Activated CD8-positive, alpha-beta T cell treated with anti-CD3 and anti-CD28 coated beads, Interleukin-2, amount 10 ng/mL, durations not matched to agents 7 days and 5 days (primary cell): ENCODE measurements at regions of chr1 and their contacts with region 1.

Region 1: DNA sequence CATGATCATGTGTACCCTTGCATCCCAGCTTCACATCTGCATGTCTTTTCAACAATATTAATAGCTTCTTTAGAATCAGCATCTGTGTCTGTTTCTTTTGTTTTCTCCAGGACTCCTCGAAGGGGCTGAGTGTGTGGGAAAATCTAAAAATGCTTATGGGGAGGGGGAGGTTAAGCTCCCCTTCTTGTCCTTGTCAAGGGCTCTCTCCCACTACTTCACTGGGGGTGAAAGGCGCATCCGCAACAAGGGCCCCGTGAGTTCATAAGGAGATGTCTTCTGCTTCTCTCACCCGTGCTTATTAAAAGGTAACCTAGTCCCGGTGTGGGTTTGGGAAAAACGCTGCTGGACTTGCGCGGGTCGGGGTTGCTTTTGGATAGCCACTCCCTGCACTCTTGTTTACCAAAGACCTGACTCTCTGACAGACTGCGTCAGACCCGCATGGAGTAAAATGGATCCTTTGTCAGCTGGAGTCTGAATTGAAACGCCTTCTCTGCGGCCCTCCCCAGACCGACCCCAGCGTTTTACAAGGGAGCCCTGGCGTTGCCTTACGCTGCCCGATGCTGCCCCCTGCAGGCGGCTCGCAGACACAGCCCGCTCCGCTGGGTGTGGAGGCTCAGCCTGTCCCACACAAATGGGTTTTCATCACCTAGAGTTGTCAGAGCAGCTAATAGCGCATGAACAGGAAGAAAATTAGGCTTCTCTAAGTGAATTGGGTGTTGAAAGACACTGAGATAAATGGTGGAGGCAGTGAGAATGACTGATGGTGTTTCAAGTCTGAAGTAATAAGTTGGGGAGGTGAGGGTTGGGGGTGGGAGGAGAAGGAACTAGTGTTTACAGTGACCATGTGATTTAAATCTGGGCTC is 53.8 kb downstream of the IER5 start:
- DNase-seq: peak; percentile 94
- ATAC-seq: peak; percentile 92
- H3K4me3 Mint-ChIP-seq: peak overlapping the region; percentile 52
- H3K27ac Mint-ChIP-seq: peak overlapping the region; percentile 70
- H3K4me1 Mint-ChIP-seq: peaks cover 66% of the 10 kb centered on the region
- H3K27me3 Mint-ChIP-seq: peaks cover 13% of the 10 kb centered on the region

Region 2: DNA sequence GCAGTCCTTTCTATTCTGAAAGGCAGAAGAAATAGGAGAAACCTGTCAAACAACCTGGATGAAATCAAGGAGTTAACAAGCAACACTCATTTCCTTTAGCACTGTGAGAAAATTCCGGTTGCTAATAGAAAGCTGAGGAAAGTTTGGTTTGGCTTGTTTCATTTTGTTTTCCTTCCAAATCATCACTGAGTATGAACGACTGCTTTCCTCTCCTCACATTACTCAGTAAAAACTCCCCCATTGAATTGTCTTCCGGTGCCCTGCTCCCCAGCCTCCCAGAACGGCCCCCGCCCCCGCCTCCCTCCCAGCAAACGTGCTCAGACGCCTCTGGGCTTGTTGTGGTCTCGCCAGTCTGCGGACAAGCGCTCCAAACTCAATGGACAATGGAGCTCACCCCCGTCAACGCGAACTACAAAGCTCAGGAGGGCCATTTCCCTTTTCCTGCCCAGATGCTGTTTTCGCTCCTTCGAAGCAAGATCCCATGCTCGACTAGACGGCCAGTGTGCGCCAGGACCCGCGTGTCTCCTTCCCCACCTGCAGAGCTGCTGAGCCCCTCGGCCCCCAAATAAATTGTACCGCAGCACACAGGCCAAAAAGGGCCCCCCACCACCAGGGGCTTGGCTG is 120.4 kb before region 1 on chr1:
- CTCF ChIA-PET with region 1: interaction called, 12 read pairs
- POLR2A ChIA-PET with region 1: interaction called, 4 read pairs
- DNase-seq: peak; percentile 72
- ATAC-seq: peak; percentile 38
- H3K4me3 Mint-ChIP-seq: peak overlapping the region; percentile 93
- H3K27ac Mint-ChIP-seq: peak overlapping the region; percentile 93
- H3K4me1 Mint-ChIP-seq: peaks cover 51% of the 10 kb centered on the region
- H3K27me3 Mint-ChIP-seq: peaks cover 18% of the 10 kb centered on the region

Region 3: DNA sequence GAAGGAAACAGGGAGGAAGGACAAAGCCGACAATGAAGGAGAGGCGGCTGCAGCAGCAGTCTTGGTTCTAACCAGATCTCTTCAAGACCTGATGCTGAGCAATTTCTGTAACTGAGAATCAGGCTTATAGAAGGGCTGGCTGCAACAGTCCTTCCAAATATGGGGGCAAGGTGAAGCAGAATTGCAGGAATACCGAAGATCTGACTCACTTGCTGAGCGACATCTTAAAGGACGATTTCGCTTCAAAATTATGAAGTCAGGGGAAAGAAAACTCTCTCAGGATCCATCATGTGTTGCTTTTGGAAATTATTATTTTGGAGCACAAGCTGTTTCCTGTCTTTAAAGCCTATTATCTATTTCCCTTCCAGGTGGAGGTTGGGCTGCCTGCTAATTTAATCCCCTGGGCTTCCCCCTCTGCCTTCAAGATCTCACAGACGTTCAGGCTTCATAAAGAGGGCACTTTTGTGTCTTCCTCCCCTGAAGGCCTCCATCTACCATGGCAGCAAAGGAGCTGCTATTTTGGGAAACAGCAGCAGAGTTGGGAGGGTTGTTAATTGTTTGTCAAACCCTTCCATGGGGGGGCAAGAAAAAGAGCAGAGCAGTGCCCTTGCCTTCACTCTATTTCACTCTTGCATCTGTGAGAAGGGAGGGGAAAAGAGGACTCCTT is 64.6 kb before region 1 on chr1:
- CTCF ChIA-PET with region 1: interaction called, 395 read pairs
- POLR2A ChIA-PET with region 1: no interaction called
- DNase-seq: no peak
- ATAC-seq: no peak
- H3K4me3 Mint-ChIP-seq: no peak overlapping the region
- H3K27ac Mint-ChIP-seq: no peak overlapping the region
- H3K4me1 Mint-ChIP-seq: peaks cover 5% of the 10 kb centered on the region
- H3K27me3 Mint-ChIP-seq: peaks cover 21% of the 10 kb centered on the region

Region 4: DNA sequence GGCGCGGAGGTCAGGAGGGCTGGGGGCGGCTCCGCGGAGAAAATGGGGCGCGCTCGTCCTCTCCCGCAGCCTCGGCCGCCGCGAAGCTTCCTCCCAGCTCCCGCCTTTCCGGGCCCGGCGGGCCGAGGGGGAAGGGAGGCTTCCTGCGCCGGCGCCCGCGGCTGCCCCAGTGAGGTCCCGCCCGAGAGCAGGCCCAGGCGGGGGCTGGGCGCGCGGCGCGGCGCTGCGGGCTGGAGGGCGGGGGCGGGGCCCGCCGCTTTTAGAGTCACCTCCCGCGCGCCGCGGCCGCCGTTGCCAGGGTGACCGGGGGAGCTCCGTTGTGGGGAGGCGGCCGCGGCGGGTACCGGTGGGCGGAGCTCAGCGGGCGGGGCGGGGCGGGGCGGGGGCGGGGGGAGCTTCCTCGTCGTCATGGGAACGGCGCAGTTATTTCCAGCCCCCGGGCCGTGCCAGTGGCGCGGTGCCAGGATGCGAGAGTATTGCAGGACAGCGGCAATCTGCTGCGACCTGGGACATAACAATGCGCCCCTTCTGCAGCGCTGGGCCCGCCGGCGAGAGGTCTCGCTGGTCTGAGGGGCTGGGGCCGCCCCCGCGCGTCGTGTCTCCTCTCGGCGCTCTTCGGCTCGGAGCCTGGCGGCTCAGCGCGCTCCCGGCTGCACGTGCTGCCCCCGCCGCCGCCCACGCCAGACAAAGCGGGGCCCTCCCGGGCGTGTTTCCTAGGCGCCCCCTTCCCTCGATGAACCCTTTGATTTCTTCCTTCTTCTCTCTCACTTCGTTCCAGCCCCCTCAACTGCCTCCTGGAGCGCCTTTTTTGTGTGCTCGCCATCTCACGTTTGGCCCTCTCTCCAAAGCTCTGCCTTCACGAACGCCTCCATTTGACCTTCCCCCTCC is 36.9 kb before region 1 on chr1:
- CTCF ChIA-PET with region 1: interaction called, 395 read pairs
- POLR2A ChIA-PET with region 1: interaction called, 17 read pairs
- DNase-seq: peak; percentile 93
- ATAC-seq: peak; percentile 81
- H3K4me3 Mint-ChIP-seq: peak overlapping the region; percentile 80
- H3K27ac Mint-ChIP-seq: peak overlapping the region; percentile 74
- H3K4me1 Mint-ChIP-seq: peaks cover 67% of the 10 kb centered on the region
- H3K27me3 Mint-ChIP-seq: peaks cover 37% of the 10 kb centered on the region

Region 5: GRCh38 chr1:181128592-181129497 is 13.5 kb before region 1 on chr1:
- CTCF ChIA-PET with region 1: interaction called, 19 read pairs
- POLR2A ChIA-PET with region 1: interaction called, 4 read pairs
- DNase-seq: no peak
- ATAC-seq: no peak
- H3K4me3 Mint-ChIP-seq: peak overlapping the region; percentile 16
- H3K27ac Mint-ChIP-seq: peak overlapping the region; percentile 56
- H3K4me1 Mint-ChIP-seq: peaks cover 66% of the 10 kb centered on the region
- H3K27me3 Mint-ChIP-seq: no peaks in the 10 kb centered on the region

Region 6: DNA sequence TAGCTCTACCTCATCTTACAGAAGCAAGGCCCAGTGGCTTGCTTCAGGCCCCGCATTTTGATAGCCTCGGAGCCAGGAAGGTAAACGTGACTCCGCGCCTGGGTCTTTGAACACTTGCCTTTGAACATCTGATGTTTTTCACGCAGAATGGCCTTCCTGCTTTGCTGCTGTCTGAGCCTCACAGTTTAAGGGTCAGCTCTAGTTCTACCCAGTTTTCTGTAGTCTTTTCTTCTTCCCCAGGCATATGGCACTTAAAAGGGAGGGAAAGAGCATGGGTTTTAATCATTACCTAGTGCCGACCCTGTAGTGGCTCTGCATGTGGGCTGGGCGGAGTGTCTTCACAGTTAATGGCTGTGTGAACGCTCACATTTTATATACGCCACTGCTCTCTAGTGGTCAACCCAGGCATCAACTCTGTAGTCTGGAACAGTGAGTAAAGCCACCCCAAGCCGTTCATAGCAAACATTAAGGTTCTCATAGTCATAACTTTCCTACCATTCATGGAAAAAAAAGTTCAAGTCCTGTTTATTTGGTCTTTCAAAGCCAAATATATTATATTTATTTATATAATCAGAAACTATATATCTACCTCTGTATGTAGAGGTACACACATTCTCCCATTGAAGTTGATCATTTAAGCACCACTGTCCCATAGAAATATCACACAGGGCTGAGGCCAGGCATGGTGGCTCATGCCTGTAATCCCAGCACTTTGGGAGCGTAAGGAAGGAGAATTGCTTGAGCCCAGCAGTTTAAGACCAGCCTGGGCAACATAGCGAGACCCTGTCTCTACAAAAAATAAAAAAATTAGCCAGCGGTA is 24.3 kb after region 1 on chr1:
- CTCF ChIA-PET with region 1: interaction called, 63 read pairs
- POLR2A ChIA-PET with region 1: interaction called, 3 read pairs
- DNase-seq: peak; percentile 84
- ATAC-seq: peak; percentile 100
- H3K4me3 Mint-ChIP-seq: no peak overlapping the region
- H3K27ac Mint-ChIP-seq: peak overlapping the region; percentile 53
- H3K4me1 Mint-ChIP-seq: peaks cover 8% of the 10 kb centered on the region
- H3K27me3 Mint-ChIP-seq: peaks cover 6% of the 10 kb centered on the region